Activated CD8-positive, alpha-beta memory T cell treated with anti-CD3 and anti-CD28 coated beads, Interleukin-2, amount 10 ng/mL, durations not matched to agents 7 days and 5 days (primary cell): ENCODE measurements at regions of chr2 and their contacts with region 1.

Region 1: DNA sequence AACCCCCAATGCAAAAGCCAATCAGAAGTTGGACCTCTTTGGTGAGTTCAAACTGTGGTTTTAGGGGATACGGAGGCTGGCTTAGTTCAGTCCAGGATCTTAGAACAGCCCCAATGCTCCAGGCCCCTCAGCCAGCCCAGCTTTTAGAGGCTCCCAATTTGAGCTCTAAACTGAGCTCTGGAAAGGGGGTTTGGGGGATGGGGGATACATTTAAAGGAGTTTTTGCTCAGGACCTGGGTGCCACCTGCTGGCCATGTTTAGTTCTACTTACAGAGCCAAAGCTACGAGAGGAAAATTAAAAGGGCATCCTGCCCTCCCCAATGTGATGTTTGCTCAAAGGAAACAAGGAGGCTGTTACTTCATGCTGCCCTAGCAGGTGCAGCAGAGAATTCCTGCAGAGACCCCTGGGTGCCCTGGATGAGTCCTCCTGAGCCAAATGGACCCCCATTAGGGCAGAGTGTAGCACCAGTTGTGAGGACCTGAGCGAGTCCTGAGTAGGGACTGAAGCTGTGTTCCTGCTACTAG is 15.9 kb upstream of the TMEM214 start:
- DNase-seq: peak; percentile 64
- ATAC-seq: peak; percentile 39
- H3K4me3 Mint-ChIP-seq: no peak overlapping the region
- H3K27ac Mint-ChIP-seq: no peak overlapping the region
- H3K4me1 Mint-ChIP-seq: peaks cover 6% of the 10 kb centered on the region
- H3K27me3 Mint-ChIP-seq: peaks cover 2% of the 10 kb centered on the region

Region 2: GRCh38 chr2:26959331-26959730 is 57.5 kb before region 1 on chr2:
- CTCF ChIA-PET with region 1: interaction called, 107 read pairs
- DNase-seq: no peak
- ATAC-seq: no peak
- H3K4me3 Mint-ChIP-seq: no peak overlapping the region
- H3K27ac Mint-ChIP-seq: no peak overlapping the region
- H3K4me1 Mint-ChIP-seq: no peaks in the 10 kb centered on the region
- H3K27me3 Mint-ChIP-seq: peaks cover 55% of the 10 kb centered on the region

Region 3: GRCh38 chr2:26964446-26965130 is 52.3 kb before region 1 on chr2:
- CTCF ChIA-PET with region 1: interaction called, 107 read pairs
- DNase-seq: no peak
- ATAC-seq: no peak
- H3K4me3 Mint-ChIP-seq: no peak overlapping the region
- H3K27ac Mint-ChIP-seq: no peak overlapping the region
- H3K4me1 Mint-ChIP-seq: peaks cover 6% of the 10 kb centered on the region
- H3K27me3 Mint-ChIP-seq: peaks cover 39% of the 10 kb centered on the region

Region 4: DNA sequence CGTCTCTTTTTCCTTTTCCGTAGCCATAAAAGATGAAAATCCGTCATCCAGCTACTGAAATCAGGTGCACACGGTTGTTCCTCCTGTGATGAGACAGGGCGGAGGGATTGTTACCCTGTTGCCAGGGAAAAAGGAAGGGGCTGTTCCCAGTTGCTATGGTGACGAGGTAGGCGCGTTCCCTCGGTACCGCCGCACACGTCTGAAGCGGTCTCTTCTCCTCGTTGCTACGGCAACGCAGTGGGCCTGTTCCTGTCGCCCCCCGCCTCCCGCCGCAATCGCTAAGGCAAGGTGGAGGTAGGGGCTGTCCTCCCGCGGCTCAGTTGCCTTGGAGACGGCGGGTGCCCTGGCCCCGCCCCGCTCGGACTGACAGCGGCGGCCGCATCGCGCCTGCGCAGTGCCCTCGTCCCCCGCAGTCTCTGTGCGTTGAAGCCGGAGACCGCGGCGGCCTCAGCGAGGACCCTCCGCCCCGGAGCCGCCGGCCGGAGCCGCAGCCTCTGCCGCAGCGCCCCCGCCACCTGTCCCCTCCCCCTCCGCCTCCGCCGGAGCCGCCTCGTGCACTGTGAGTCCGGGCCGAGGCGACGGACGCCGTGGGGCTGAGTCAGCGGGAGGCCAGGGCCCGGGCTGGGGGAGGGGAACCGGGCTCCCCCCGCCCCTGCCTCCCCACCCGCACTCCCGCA is 46.5 kb before region 1 on chr2 and contains the start of gene MAPRE3:
- CTCF ChIA-PET with region 1: interaction called, 13 read pairs
- DNase-seq: peak; percentile 82
- ATAC-seq: peak; percentile 96
- H3K4me3 Mint-ChIP-seq: peak within 1 kb of the TSS; percentile 71
- H3K27ac Mint-ChIP-seq: no peak within 1 kb of the TSS
- H3K4me1 Mint-ChIP-seq: peaks cover 12% of the 10 kb centered on the region
- H3K27me3 Mint-ChIP-seq: peaks cover 56% of the 10 kb centered on the region
- total RNA-seq, gene MAPRE3: 0.91 to 1.3 TPM

Region 5: DNA sequence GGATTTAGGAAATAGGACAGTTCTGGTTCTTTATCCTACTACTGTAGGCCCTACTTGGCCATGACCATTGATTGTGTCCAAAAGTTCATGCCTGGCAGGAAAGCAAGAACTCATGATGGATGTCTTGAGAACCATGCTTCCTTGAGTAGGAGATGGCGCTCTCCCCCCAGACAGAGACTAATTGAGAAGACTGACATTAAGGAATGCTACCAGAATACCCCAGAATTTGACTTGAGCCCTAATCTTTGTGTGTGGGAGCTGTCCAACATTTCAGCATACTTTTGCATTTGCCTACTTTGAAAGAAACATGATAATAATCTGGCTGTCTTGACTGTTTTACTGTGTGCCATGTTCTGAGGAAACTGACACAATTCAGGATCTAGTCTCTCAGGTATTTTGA is 23.1 kb before region 1 on chr2:
- CTCF ChIA-PET with region 1: interaction called, 13 read pairs
- DNase-seq: no peak
- ATAC-seq: no peak
- H3K4me3 Mint-ChIP-seq: no peak overlapping the region
- H3K27ac Mint-ChIP-seq: no peak overlapping the region
- H3K4me1 Mint-ChIP-seq: peaks cover 2% of the 10 kb centered on the region
- H3K27me3 Mint-ChIP-seq: peaks cover 5% of the 10 kb centered on the region